ENCODE measurements at regions of chr17 and their contacts with region 1.

Region 1: GRCh38 chr17:45218895-45219661 is 2.6 kb upstream of the FMNL1 start:
- DNase-seq: peak; percentile 77
- ATAC-seq: peak; percentile 90
- H3K4me3 ChIP-seq: no peak overlapping the region
- H3K27ac ChIP-seq: no peak overlapping the region
- H3K4me1 ChIP-seq: peaks cover 9% of the 10 kb centered on the region; the same call in 1 of the 2 replicates
- H3K27me3 ChIP-seq: peaks cover 15% of the 10 kb centered on the region
- CTCF ChIP-seq: peak; percentile 98
- POLR2A ChIP-seq: peak; percentile 39; the same call in 1 of the 2 replicates
- RAD21 ChIP-seq: peak; percentile 97

Region 2: DNA sequence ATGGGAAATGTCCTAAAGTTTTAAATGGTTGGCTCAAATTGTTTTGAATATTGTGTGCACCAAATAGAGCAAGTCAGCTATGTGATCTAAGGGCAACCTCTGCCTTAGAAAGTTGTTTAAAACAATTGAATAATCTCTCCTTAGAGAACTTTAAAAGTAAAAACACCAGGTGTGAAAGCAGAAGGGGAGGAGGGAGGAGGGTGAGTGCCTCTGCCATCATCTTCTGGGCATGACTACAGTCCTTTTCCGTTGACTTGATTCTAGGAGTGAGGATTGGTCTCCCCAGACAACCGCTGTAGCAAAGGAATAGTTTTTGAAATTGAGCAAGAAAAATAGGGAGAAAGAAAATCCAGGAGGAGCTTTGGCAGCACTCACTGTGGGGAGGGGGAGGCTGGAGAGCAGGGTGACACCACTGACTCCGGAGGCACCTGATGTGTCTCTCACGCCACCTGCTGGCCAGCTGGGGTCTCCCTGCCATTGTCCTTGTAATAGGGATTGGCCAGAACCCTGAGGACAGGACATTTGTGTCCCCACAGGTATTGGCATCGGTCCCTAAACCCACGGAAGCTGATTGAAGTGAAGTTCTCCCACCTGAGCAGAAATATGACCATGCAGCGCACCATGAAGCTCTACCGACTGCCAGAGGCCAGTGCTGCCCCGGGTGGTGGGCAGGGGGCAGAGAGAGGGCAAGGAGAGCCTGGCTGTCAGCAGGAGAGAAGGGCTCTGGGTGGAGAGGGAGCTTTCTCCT is 120.0 kb before region 1 on chr17:
- CTCF ChIA-PET with region 1: no interaction called
- POLR2A ChIA-PET with region 1: no interaction called
- dilution Hi-C with region 1: no loop called
- in situ Hi-C with region 1: no loop called
- intact Hi-C with region 1: no loop called
- DNase-seq: peak; percentile 66
- ATAC-seq: peak; percentile 85
- H3K4me3 ChIP-seq: no peak overlapping the region
- H3K27ac ChIP-seq: peak overlapping the region; percentile 66; the same call in 1 of the 2 replicates
- H3K4me1 ChIP-seq: peaks cover 7% of the 10 kb centered on the region; the same call in 1 of the 2 replicates
- H3K27me3 ChIP-seq: no peaks in the 10 kb centered on the region
- CTCF ChIP-seq: peak; percentile 78
- POLR2A ChIP-seq: no peak
- RAD21 ChIP-seq: peak; percentile 77

Region 3: DNA sequence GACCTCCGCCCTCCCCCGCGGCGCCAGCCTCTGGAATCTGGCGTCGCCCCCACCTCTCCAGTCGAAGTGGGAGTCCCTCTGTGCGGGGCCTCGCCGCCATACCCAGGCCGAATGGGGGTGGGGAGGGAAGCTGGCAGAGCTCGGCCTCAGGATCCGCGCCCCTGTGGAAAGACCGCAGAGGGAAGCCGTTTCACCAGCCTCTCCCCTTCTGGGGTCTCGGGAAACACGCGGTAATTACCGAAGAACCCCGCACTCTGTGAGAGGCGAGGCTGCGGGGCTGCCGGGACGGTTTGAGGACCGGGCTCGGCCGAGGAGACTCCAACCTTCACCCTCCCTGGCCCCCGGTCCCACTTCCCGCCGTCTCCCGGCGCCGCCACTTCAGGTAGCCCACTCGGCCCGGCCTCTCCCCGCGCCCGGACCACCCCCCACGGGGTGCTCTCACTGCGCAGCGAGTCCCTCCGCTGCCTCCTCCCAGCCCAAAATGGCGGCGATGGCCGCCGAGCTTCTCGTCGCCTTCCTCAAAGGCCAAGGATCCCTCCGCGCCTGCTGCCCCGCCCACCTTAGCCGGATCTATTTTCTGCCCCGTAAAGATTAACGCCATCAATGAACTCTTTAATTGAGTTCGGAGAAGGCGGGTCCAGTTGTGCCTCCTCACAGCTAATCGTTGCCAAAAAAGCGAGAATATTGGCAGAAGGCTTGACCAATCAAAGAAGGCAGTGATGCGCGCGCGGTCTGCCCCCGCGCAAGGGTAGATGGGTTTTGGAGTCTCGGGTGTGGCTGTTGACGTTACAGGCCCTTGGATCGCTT is 57.9 kb before region 1 on chr17:
- CTCF ChIA-PET with region 1: no interaction called
- POLR2A ChIA-PET with region 1: no interaction called
- dilution Hi-C with region 1: no loop called
- in situ Hi-C with region 1: no loop called
- intact Hi-C with region 1: no loop called
- DNase-seq: peak; percentile 100
- ATAC-seq: peak; percentile 94
- H3K4me3 ChIP-seq: peak overlapping the region; percentile 75
- H3K27ac ChIP-seq: peak overlapping the region; percentile 98
- H3K4me1 ChIP-seq: peaks cover 17% of the 10 kb centered on the region
- H3K27me3 ChIP-seq: no peaks in the 10 kb centered on the region
- CTCF ChIP-seq: no peak
- POLR2A ChIP-seq: peak; percentile 95
- RAD21 ChIP-seq: no peak; the same call in 1 of the 2 replicates

Region 4: GRCh38 chr17:45235416-45236281 is 16.6 kb after region 1 on chr17:
- CTCF ChIA-PET with region 1: interaction called, 7 read pairs
- POLR2A ChIA-PET with region 1: no interaction called
- dilution Hi-C with region 1: no loop called
- in situ Hi-C with region 1: no loop called
- intact Hi-C with region 1: loop called (anchors 1 kb)
- DNase-seq: peak; percentile 77
- ATAC-seq: peak; percentile 76
- H3K4me3 ChIP-seq: no peak overlapping the region
- H3K27ac ChIP-seq: no peak overlapping the region
- H3K4me1 ChIP-seq: peaks cover 11% of the 10 kb centered on the region
- H3K27me3 ChIP-seq: no peaks in the 10 kb centered on the region; the same call in 1 of the 2 replicates
- CTCF ChIP-seq: peak; percentile 77
- POLR2A ChIP-seq: no peak
- RAD21 ChIP-seq: peak; percentile 72

Region 5: GRCh38 chr17:45277216-45277849 is 58.3 kb after region 1 on chr17:
- CTCF ChIA-PET with region 1: no interaction called
- POLR2A ChIA-PET with region 1: no interaction called
- dilution Hi-C with region 1: no loop called
- in situ Hi-C with region 1: no loop called
- intact Hi-C with region 1: loop called (anchors 2 kb)
- DNase-seq: peak; percentile 91
- ATAC-seq: peak; percentile 73
- H3K4me3 ChIP-seq: no peak overlapping the region
- H3K27ac ChIP-seq: no peak overlapping the region
- H3K4me1 ChIP-seq: peaks cover 3% of the 10 kb centered on the region; the same call in 1 of the 2 replicates
- H3K27me3 ChIP-seq: no peaks in the 10 kb centered on the region
- CTCF ChIP-seq: peak; percentile 83
- POLR2A ChIP-seq: no peak
- RAD21 ChIP-seq: peak; percentile 86

Region 6: GRCh38 chr17:45385331-45385997 is 166.4 kb after region 1 on chr17:
- CTCF ChIA-PET with region 1: interaction called, 8 read pairs
- POLR2A ChIA-PET with region 1: no interaction called
- dilution Hi-C with region 1: no loop called
- in situ Hi-C with region 1: loop called (anchors 5 kb)
- intact Hi-C with region 1: loop called (anchors 1 kb)
- DNase-seq: peak; percentile 76
- ATAC-seq: peak; percentile 90
- H3K4me3 ChIP-seq: no peak overlapping the region
- H3K27ac ChIP-seq: no peak overlapping the region; the same call in 1 of the 2 replicates
- H3K4me1 ChIP-seq: peaks cover 5% of the 10 kb centered on the region; the same call in 1 of the 2 replicates
- H3K27me3 ChIP-seq: peaks cover 9% of the 10 kb centered on the region; the same call in 1 of the 2 replicates
- CTCF ChIP-seq: peak; percentile 99
- POLR2A ChIP-seq: peak; percentile 66; the same call in 1 of the 2 replicates
- RAD21 ChIP-seq: peak; percentile 100

Region 7: DNA sequence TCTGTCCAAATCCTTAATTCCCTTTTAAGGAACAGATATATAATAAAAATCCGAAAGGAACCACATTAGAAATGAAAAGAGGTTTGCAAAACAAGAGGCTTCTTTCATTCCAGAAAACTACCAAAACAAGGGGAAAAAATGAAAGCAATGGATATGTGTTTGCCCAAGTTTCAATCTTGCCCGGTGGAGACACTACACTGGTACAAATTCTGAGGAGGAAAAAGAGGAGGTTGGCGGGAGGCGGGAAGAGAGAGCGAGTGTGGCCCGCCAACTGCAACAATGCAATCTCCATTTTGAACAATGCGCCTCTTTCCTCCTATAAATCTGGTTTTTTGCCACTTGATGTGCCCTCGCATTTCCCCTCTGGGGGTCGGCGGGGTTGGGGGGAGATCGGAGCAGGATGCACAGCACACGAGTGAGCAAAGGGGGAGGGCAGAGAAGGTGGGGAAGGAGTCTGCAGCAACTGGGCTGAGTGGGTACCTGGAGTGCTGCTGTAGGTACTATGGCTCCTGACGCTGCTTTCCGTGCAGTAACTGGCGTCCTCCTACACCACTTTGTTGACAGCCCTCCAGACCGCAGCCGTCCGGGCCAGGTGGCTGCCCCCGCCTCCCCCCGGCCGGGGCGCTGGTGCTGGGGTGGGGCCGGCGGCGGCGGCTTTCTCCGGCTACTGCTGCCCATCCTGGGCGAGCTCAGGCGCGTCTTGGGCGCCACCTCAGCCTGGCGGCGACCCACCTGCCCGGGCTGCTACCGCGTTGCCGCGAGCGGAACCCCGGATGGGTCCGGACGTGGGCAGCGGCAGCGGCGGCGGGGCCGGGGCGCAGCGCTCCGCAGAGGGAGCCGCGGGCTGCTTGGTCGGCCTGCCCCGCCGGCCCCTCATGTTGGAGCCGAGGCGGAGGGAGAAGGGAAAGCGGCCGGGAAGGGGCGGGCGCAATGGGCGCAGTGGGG is 365.3 kb after region 1 on chr17:
- CTCF ChIA-PET with region 1: no interaction called
- POLR2A ChIA-PET with region 1: no interaction called
- dilution Hi-C with region 1: no loop called
- in situ Hi-C with region 1: loop called (anchors 25 kb)
- intact Hi-C with region 1: no loop called
- DNase-seq: peak; percentile 36
- ATAC-seq: peak; percentile 65
- H3K4me3 ChIP-seq: peak overlapping the region; percentile 81
- H3K27ac ChIP-seq: peak overlapping the region; percentile 87
- H3K4me1 ChIP-seq: peaks cover 3% of the 10 kb centered on the region
- H3K27me3 ChIP-seq: no peaks in the 10 kb centered on the region
- CTCF ChIP-seq: no peak
- POLR2A ChIP-seq: no peak
- RAD21 ChIP-seq: no peak

Region 8: DNA sequence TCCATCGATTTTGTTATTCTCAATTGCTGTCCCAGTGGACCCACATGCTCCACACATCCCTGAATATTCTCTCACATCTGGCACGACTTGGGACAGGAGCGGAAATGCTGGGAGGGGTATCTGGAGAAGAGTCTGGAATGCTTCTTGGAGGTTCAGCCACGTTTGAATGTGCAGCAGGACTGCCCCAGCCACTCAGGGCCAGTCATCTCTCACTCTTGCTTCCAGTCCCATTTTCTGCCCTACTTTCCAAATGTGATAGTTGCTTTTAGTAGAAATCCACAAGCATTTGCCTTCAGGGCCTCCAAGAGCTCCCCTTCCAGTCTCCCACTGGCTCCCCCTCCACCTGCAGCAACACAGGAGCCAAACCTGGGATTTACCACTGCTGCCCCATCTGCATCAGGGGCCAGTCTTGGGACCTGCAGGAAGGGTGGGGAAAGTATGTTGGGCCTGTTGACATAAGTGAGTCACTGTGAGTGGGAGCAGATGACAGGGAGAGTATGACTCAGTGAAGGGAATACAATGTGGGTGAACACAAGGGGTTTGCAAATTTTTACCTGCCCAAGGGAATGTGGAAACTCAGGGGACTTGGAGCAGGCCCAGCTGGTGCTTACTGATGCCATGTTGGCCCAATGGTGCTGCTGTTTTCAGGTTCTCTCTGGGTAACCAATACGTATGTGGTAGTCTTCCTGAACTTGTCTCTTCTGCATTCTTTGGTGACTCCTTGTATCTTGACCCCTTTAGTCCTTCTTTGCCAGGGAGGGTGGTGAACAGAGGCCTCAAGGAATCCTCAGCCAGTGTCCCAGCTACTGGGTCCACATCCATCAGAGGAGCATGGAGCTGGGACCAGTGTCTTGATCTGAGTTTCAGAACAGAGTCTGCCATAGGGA is 486.3 kb after region 1 on chr17:
- CTCF ChIA-PET with region 1: no interaction called
- POLR2A ChIA-PET with region 1: no interaction called
- dilution Hi-C with region 1: no loop called
- in situ Hi-C with region 1: no loop called
- intact Hi-C with region 1: no loop called
- DNase-seq: peak; percentile 42
- ATAC-seq: no peak
- H3K4me3 ChIP-seq: no peak overlapping the region
- H3K27ac ChIP-seq: no peak overlapping the region
- H3K4me1 ChIP-seq: no peaks in the 10 kb centered on the region
- H3K27me3 ChIP-seq: peaks cover 11% of the 10 kb centered on the region
- CTCF ChIP-seq: no peak
- POLR2A ChIP-seq: no peak
- RAD21 ChIP-seq: no peak

Region 9: DNA sequence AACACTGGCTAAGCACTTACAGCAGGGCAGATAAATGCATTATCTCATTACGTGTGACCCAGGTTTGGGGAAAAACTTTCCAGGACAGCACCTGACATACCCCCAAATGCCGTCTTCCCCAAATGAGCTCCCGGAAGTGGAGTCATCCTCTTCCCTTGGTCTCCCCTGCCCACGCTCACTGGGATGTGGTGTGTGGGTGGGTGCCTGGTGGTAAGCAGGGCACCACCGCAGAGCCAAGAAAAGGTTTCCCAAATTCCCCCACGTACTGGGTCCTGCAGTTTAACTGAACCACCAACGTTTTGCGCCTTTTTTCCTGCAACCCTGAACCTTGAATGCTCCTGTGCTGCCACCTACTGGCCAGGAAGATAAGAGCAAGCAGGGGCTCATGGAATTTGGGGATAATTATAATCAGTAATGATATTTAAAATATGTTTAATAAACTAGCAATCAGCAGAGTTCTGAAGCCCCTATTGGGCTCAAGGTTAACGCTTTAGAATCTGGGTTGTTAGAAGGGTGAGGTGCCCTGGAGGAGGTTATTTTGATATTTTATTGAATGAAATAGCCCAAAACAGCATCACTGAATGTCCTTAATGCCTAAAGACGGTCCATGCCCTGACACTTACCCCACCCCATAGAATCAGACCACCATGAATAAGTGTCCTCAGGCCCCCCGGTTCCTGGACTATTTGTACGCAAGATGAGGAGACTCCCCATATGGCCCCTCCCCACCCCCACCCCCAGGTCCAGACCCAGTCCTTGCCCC is 633.6 kb after region 1 on chr17:
- CTCF ChIA-PET with region 1: no interaction called
- POLR2A ChIA-PET with region 1: no interaction called
- dilution Hi-C with region 1: no loop called
- in situ Hi-C with region 1: loop called (anchors 10 kb)
- intact Hi-C with region 1: no loop called
- DNase-seq: peak; percentile 55
- ATAC-seq: peak; percentile 82
- H3K4me3 ChIP-seq: no peak overlapping the region
- H3K27ac ChIP-seq: no peak overlapping the region
- H3K4me1 ChIP-seq: no peaks in the 10 kb centered on the region
- H3K27me3 ChIP-seq: peaks cover 7% of the 10 kb centered on the region; the same call in 1 of the 2 replicates
- CTCF ChIP-seq: peak; percentile 89
- POLR2A ChIP-seq: no peak
- RAD21 ChIP-seq: peak; percentile 74